ENCODE measurements at regions of chr10 and their contacts with region 1.

Region 1: DNA sequence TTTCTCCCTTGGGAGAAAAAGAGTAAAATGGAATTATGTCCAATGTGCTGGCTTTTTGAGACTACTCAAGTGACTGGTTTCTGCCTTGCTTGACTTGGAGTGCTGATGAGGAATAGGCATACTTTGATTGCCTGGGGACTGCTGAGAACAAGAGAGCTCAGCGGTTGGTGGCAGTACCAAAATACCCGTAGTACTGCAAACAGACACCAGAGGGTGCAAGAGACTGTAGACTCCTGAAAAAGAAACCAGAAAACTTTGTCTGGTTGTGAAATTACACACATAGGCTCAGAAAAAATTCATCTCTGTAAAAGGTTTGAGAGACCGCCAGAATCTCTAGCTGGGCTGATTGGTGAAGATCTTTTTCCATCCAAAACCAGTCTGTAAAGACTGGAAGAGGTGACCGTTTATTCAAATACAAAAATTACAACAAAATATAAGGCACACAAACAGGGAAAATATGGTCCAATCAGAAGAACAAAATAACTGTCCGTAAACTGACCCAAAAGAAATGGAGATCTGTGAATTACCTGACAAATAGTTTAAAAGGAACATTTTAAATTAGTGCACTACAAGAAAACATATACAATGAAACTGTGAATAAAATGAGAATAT is 18.5 kb downstream of the BICC1 start:
- DNase-seq: peak; percentile 71
- H3K4me3 Mint-ChIP-seq: no peak overlapping the region
- H3K27ac Mint-ChIP-seq: no peak overlapping the region
- H3K4me1 Mint-ChIP-seq: no peaks in the 10 kb centered on the region
- H3K27me3 Mint-ChIP-seq: peaks cover 20% of the 10 kb centered on the region

Region 2: GRCh38 chr10:57460540-57460939 is 1070.7 kb before region 1 on chr10:
- CTCF ChIA-PET with region 1: no interaction called
- intact Hi-C with region 1: loop called (anchors 5 kb)
- DNase-seq: no peak
- H3K4me3 Mint-ChIP-seq: no peak overlapping the region
- H3K27ac Mint-ChIP-seq: no peak overlapping the region
- H3K4me1 Mint-ChIP-seq: no peaks in the 10 kb centered on the region
- H3K27me3 Mint-ChIP-seq: no peaks in the 10 kb centered on the region

Region 3: GRCh38 chr10:57952741-57953140 is 578.4 kb before region 1 on chr10:
- CTCF ChIA-PET with region 1: no interaction called
- intact Hi-C with region 1: no loop called
- DNase-seq: no peak
- H3K4me3 Mint-ChIP-seq: no peak overlapping the region
- H3K27ac Mint-ChIP-seq: no peak overlapping the region
- H3K4me1 Mint-ChIP-seq: no peaks in the 10 kb centered on the region
- H3K27me3 Mint-ChIP-seq: no peaks in the 10 kb centered on the region

Region 4: DNA sequence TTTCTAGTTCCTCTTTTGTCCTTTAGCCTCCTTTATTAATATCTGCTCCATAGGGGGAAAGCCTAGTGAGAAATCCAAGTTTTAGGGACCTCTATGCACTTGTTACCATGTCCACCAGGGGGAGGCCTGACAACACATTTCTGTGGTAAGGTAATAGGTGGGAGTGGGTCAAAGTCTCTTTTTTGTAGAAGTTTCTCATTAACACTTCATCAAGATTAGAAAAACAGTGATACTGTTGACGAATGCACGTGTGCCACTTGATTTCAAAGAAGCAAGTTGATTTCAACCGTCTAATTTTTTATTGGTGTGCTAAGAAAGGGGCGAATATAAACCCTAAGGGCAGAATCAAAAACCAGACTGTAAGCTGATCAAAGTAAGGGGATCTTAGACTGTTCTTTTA is 231.6 kb before region 1 on chr10:
- CTCF ChIA-PET with region 1: interaction called, 3 read pairs
- intact Hi-C with region 1: loop called (anchors 1 kb)
- DNase-seq: peak; percentile 78
- H3K4me3 Mint-ChIP-seq: no peak overlapping the region
- H3K27ac Mint-ChIP-seq: no peak overlapping the region
- H3K4me1 Mint-ChIP-seq: no peaks in the 10 kb centered on the region
- H3K27me3 Mint-ChIP-seq: peaks cover 5% of the 10 kb centered on the region

Region 5: DNA sequence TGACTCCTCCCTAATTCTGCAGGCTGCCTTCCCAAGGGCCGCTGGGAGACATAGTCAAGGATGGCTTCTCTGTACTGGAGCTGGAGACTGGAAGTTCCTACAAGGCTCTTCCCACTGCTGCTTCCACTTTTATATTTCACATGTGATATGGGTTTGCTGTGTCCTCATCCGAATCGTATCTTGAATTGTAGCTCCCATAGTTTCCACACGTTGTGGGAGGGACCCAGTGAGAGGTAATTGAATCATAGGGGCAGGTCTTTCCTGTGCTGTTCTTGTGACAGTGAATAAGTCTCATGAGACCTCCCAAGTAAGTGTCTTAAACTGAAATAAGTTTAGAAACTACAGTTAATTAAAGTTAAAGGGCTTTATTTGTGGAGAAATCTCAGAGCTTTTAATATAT is 65.6 kb before region 1 on chr10:
- CTCF ChIA-PET with region 1: no interaction called
- intact Hi-C with region 1: no loop called
- DNase-seq: no peak
- H3K4me3 Mint-ChIP-seq: no peak overlapping the region
- H3K27ac Mint-ChIP-seq: no peak overlapping the region
- H3K4me1 Mint-ChIP-seq: no peaks in the 10 kb centered on the region
- H3K27me3 Mint-ChIP-seq: peaks cover 34% of the 10 kb centered on the region

Region 6: DNA sequence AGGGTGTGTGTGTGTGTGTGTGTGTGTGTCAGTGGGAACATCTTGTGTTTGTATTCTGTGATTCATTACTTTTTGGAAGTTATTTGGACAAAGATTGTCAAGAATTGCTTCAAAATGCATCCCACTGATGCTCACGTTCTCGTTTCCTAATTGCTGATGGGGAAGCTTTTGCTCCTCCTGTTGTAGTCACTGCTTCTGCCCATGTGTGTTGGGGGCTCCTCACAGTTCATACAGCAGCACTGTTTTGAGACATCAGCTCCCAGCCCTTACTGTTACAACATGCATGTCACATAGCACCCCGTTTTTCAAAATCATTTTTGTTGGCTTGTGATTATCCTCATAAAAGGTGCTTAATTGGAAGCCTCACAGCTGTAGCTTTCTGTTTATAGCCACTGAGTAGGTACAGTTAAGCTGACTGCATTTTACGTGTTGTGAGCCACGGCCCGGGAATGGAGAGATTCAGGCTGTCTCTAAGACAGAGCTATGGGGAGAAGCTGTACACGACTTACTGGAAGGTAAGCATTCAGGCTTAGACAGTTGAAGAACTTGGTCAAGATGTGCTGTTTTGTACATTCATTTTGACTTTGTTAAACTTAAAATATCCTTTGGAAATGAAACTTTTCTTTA is 68.8 kb after region 1 on chr10:
- CTCF ChIA-PET with region 1: no interaction called
- intact Hi-C with region 1: no loop called
- DNase-seq: no peak
- H3K4me3 Mint-ChIP-seq: no peak overlapping the region
- H3K27ac Mint-ChIP-seq: no peak overlapping the region
- H3K4me1 Mint-ChIP-seq: no peaks in the 10 kb centered on the region
- H3K27me3 Mint-ChIP-seq: no peaks in the 10 kb centered on the region

Region 7: GRCh38 chr10:58641095-58641531 is 109.9 kb after region 1 on chr10:
- CTCF ChIA-PET with region 1: interaction called, 5 read pairs
- intact Hi-C with region 1: loop called (anchors 1 kb)
- DNase-seq: no peak
- H3K4me3 Mint-ChIP-seq: no peak overlapping the region
- H3K27ac Mint-ChIP-seq: no peak overlapping the region
- H3K4me1 Mint-ChIP-seq: no peaks in the 10 kb centered on the region
- H3K27me3 Mint-ChIP-seq: peaks cover 8% of the 10 kb centered on the region

Region 8: DNA sequence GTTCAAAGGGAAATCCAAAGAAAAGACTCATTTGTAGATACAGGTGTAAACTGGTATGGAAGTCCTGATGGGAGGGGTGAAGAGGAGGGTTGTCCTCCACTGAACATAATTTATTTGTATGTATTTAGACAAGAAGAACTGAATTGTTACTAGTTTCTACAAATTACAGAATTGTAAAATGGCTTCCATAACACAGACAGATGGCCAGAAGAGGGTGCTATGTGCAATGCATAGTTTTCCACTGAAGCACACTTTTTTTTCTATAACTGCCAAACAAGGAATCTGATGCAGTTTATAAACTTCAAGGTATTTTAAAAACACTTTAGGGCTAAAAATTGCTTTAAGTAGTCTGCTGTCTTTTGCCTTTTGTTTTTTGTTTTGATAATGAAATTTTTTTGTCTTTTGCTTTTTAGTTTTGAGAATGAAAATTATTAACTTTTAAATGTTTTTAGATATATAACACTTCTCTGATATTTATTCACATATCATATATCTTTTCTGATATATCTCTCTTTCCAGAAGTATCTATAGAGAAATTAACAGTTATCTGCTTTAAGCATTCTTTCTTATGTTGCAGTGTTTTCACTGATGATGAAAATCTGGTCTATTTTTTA is 703.7 kb after region 1 on chr10:
- CTCF ChIA-PET with region 1: no interaction called
- intact Hi-C with region 1: loop called (anchors 10 kb)
- DNase-seq: peak; percentile 5
- H3K4me3 Mint-ChIP-seq: no peak overlapping the region
- H3K27ac Mint-ChIP-seq: no peak overlapping the region
- H3K4me1 Mint-ChIP-seq: no peaks in the 10 kb centered on the region
- H3K27me3 Mint-ChIP-seq: no peaks in the 10 kb centered on the region

Measured in activated naive CD4-positive, alpha-beta T cell treated with anti-CD3 and anti-CD28 coated beads for 36 hours (primary cell).